MCF 10A (cell line): ENCODE measurements at regions of chr11 and their contacts with region 1.

Region 1: DNA sequence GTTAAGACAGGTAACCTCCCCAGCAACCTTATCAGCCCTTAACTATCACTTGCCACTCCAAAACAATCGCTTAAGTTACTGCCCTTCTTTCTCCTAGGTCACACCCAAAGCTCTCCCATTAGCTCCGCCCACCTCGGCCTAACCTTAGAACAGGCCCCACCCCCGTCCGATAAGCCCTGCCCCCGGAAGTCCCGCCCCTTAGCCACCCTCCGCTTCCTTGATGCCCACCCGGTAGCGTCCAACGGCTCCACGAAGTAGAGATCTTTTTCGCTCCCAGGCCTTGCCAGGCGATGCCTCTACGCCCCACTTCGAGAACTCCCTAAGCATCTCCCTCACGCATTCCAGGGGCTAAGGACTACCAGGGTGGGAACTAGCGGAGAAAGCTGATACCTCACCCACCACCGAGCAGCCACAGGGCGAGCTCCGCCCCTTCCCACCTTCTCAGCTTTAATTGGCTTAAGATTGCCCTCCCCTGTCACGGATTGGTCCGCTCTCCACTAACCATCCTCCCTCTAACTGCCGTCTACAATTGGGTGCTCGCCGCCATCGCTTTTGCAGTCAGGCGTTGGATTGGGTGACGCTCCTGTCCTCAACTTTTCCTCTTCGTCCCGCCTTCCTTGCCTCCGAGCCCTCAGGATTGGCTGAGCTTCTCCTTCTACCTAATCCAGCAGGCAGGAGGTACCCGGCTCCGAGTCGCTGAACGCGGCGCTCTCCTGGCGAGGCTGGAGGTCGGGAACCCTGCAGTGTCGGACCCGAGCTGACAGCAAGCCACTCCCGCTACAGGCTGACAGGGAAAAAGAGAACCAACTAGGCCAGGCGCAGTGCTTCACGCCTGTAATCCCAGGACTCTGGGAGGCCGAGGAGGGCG is at the start of gene ZBTB3:
- DNase-seq: peak; percentile 100
- H3K4me3 Mint-ChIP-seq: peak within 1 kb of the TSS; percentile 98
- H3K27ac Mint-ChIP-seq: peak within 1 kb of the TSS; percentile 96
- H3K4me1 Mint-ChIP-seq: peaks cover 3% of the 10 kb centered on the region
- H3K27me3 Mint-ChIP-seq: no peaks in the 10 kb centered on the region
- CTCF ChIP-seq: no peak
- total RNA-seq, gene ZBTB3: 7.1 and 11.6 TPM in 2 replicates

Region 2: GRCh38 chr11:62732801-62733200 is 21.2 kb before region 1 on chr11:
- CTCF ChIA-PET with region 1: interaction called, 5 read pairs
- POLR2A ChIA-PET with region 1: interaction called, 127 read pairs
- intact Hi-C with region 1: no loop called
- DNase-seq: peak; percentile 57
- H3K4me3 Mint-ChIP-seq: no peak overlapping the region
- H3K27ac Mint-ChIP-seq: no peak overlapping the region
- H3K4me1 Mint-ChIP-seq: no peaks in the 10 kb centered on the region
- H3K27me3 Mint-ChIP-seq: no peaks in the 10 kb centered on the region
- CTCF ChIP-seq: peak; percentile 42

Region 3: GRCh38 chr11:62771144-62772021 is 17.4 kb after region 1 on chr11 and contains the start of gene TAF6L:
- CTCF ChIA-PET with region 1: interaction called, 9 read pairs
- POLR2A ChIA-PET with region 1: interaction called, 72 read pairs
- intact Hi-C with region 1: loop called (anchors 1 kb)
- DNase-seq: peak; percentile 98
- H3K4me3 Mint-ChIP-seq: peak within 1 kb of the TSS; percentile 98
- H3K27ac Mint-ChIP-seq: peak within 1 kb of the TSS; percentile 95
- H3K4me1 Mint-ChIP-seq: peaks cover 5% of the 10 kb centered on the region
- H3K27me3 Mint-ChIP-seq: no peaks in the 10 kb centered on the region
- CTCF ChIP-seq: no peak
- total RNA-seq, gene TAF6L: 11.6 and 12.0 TPM in 2 replicates